Mammary epithelial cell (primary cell): ENCODE measurements at regions of chr9 and their contacts with region 1.

Region 1: DNA sequence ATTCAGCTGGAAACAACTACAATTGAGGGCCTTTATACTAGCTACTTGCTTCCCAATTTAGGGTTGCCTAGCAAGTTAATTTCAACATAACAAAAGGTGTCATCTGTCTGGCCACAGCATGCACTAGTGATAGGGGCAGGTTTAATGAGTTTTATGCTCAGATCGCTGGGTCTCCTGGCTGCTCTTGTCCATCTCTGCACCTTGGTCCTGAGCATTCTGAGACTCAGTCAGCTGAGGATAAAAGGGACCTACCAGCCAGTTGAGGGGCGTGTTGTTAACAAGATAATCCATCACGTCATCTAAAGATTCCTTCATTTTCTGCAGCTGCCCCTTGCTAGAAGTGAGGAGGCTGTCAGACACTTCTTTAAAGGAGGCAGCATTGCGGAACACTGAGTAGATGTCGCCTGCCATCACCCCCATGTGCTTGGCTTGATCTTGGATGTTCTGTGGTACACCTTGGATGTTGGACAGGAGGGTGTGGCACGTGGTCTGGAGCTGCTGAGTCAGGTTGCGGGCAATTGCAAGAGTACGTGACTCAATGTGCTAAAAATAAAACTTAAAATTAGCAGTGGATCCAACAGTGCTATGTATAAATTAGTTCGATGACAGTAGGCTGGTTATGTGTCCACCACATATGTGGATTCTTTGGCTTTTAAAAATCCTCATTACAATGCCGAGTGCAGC is 11.0 kb downstream of the PLIN2 start:
- DNase-seq: peak; percentile 82
- H3K4me3 ChIP-seq: no peak overlapping the region
- H3K27ac ChIP-seq: no peak overlapping the region
- H3K4me1 ChIP-seq: peaks cover 38% of the 10 kb centered on the region
- H3K27me3 ChIP-seq: no peaks in the 10 kb centered on the region
- CTCF ChIP-seq: no peak

Region 2: DNA sequence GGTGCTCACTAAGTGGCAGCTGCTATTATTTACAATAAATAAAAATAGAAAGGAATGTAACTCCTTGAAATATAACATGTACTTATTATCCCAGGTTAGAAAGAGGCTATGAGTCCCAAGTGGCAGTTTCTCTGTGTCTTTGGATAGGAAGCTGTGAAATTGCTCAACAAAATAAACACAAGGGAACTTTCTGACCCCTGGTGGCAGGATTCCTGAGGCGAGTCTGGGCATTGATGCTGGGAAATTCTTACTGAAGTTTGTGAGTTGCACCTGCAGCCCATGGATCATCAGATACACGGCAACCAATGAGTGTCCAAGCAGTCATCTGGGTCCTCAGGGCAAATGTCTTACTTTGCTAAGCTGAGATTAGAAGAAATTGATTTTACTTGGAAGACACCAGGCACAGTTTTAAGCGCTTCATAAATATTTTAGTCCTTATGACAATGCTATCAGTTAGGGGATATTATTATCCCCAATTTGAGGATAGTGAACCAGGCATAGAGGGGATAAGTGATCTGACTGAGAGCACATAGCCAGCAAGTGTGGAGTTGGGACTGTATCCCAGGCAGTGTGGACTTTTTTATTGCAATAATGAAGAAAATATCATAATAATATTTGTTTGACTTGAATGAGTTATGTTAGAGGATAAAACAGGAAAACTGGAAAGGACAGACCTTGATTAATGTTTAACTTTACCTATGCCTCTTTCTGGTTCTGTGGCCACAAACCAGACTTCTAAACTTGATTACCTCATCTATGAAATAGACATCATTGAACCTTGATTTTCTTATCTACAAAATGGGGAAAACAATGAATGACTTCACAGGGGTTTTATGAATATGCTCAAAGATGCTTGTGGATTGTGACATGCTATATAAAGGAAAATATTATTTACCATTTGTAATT is 907.8 kb before region 1 on chr9:
- CTCF ChIA-PET with region 1: interaction called, 10 read pairs
- dilution Hi-C with region 1: no loop called
- in situ Hi-C with region 1: no loop called
- intact Hi-C with region 1: no loop called
- DNase-seq: peak; percentile 65
- H3K4me3 ChIP-seq: no peak overlapping the region
- H3K27ac ChIP-seq: no peak overlapping the region
- H3K4me1 ChIP-seq: peaks cover 5% of the 10 kb centered on the region
- H3K27me3 ChIP-seq: no peaks in the 10 kb centered on the region
- CTCF ChIP-seq: peak; percentile 72 to 79

Region 3: GRCh38 chr9:19009391-19009965 is 106.8 kb before region 1 on chr9:
- CTCF ChIA-PET with region 1: no interaction called
- dilution Hi-C with region 1: no loop called
- in situ Hi-C with region 1: no loop called
- intact Hi-C with region 1: no loop called
- DNase-seq: no peak
- H3K4me3 ChIP-seq: no peak overlapping the region
- H3K27ac ChIP-seq: no peak overlapping the region
- H3K4me1 ChIP-seq: no peaks in the 10 kb centered on the region
- H3K27me3 ChIP-seq: peaks cover 1% of the 10 kb centered on the region
- CTCF ChIP-seq: no peak

Region 4: DNA sequence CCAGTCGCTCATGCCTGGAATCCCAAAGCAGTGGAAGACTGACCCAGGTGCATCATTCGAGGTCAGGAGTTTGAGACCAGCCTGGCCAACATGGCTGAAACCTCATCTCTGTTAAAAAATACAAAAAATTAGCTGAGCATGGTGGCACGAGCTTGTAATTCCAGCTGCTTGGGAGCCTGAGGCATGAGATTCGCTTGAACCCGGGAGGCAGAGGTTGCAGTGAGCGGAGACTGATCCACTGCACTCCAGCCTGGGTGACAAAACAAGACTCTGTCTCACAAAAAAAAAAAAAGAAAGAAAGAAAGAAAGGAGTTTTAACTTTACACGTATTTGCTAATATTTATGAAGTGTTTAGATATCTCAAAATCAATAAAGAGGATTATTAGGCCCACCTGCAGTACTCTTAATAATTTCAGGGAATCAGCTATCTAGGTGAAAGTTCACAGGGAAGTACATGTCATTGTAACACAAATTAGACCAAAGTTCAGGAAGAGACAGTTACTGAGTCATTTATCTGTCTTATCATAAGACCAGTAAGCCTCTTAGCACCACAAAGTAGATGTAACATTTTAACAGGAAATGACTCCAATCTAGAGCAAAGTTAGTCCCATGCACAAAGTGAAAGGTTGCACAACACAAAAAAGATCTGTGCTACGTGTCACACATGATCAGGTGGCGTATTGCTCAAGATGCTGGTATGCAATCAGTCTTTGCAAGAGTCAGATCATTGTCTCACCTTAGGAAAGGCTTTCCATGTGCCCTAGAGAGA is 45.2 kb after region 1 on chr9:
- CTCF ChIA-PET with region 1: no interaction called
- dilution Hi-C with region 1: no loop called
- in situ Hi-C with region 1: loop called in 1 of 2 experiments (anchors 5 kb)
- intact Hi-C with region 1: loop called (anchors 5 kb)
- DNase-seq: peak; percentile 98
- H3K4me3 ChIP-seq: no peak overlapping the region
- H3K27ac ChIP-seq: peak overlapping the region; percentile 58
- H3K4me1 ChIP-seq: peaks cover 16% of the 10 kb centered on the region
- H3K27me3 ChIP-seq: no peaks in the 10 kb centered on the region
- CTCF ChIP-seq: no peak

Region 5: DNA sequence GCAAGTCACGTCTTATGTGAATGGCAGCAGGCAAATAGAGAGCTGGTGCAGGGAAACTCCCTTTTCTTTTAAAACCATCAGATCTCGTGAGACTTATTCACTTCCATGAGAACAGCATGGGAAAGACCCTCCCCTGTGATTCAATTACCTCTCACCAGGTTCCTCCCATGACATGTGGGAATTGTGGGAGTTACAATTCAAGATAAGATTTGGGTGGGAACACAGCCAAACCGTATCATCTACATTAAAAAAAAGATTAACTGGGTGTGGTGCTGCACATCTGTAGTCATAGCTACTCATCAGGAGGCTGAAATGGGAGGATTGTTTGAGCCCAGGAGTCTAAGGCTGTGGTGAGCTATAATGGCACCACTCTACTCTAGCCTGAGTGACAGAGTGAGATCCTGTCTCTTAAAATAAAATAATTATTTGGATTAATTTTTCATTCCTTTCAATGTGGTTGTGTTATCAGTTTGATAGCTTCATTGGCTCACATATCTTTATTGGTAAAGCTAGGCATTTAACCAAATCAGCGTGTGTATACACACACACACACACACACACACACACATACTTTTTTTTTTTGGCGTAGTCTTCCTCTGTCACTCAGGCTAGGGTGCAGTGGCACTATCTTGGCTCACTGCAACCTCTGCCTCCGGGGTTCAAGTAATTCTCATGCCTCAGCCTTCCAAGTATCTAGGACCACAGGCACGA is 136.1 kb after region 1 on chr9:
- CTCF ChIA-PET with region 1: no interaction called
- dilution Hi-C with region 1: no loop called
- in situ Hi-C with region 1: no loop called
- intact Hi-C with region 1: no loop called
- DNase-seq: no peak
- H3K4me3 ChIP-seq: no peak overlapping the region
- H3K27ac ChIP-seq: no peak overlapping the region
- H3K4me1 ChIP-seq: no peaks in the 10 kb centered on the region
- H3K27me3 ChIP-seq: no peaks in the 10 kb centered on the region
- CTCF ChIP-seq: no peak